Posterior vena cava (tissue), 2 donors: ENCODE measurements at regions of chrX and their contacts with region 1.

Region 1: GRCh38 chrX:38066926-38067325 is 60.6 kb downstream of the SYTL5 start:
- DNase-seq: no peak

Region 2: DNA sequence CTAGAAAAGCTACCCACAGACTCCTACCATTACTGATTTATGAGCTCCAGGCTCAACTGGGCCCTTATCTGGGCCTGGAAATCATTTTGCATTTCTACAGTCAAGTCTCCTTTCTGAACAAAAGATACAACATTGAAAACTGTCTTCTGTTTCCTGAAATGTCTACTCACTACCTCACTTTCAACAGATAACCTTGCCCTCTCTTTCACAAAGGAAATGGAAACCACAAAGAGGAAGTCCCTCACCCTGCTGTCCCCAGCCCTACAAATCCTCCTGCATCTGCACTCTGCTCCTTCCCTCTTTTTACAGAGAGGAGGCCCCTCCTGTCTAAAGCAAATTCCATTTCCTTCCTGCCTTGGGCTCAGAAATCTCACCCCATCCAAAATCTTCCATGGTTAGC is 311.9 kb before region 1 on chrX:
- intact Hi-C with region 1: no loop called
- DNase-seq: no peak

Region 3: GRCh38 chrX:38085813-38086212 is 18.9 kb after region 1 on chrX:
- intact Hi-C with region 1: loop called in 1 of 2 experiments (anchors 1 kb)
- DNase-seq: no peak